ENCODE measurements at regions of chr4 and their contacts with region 1.

Region 1: GRCh38 chr4:163554870-163555465 is 60.5 kb downstream of the TMA16 start:
- DNase-seq: no peak
- ATAC-seq: no peak
- H3K4me3 ChIP-seq: no peak overlapping the region
- H3K27ac ChIP-seq: no peak overlapping the region
- H3K4me1 ChIP-seq: 0 out of 2 replicates have a peak, but pooled peaks cover 6% of the 10 kb centered on the region
- H3K27me3 ChIP-seq: no peaks in the 10 kb centered on the region
- CTCF ChIP-seq: peak; percentile 28; the same call in 1 of the 2 replicates
- EP300 ChIP-seq: no peak
- POLR2A ChIP-seq: no peak
- RAD21 ChIP-seq: no peak

Region 2: GRCh38 chr4:163663454-163664225 is 108.7 kb after region 1 on chr4:
- CTCF ChIA-PET with region 1: no interaction called
- POLR2A ChIA-PET with region 1: no interaction called
- in situ Hi-C with region 1: loop called (anchors 10 kb)
- intact Hi-C with region 1: no loop called
- DNase-seq: no peak
- ATAC-seq: no peak
- H3K4me3 ChIP-seq: no peak overlapping the region
- H3K27ac ChIP-seq: no peak overlapping the region
- H3K4me1 ChIP-seq: no peaks in the 10 kb centered on the region
- H3K27me3 ChIP-seq: no peaks in the 10 kb centered on the region
- CTCF ChIP-seq: no peak
- EP300 ChIP-seq: no peak
- POLR2A ChIP-seq: no peak
- RAD21 ChIP-seq: no peak

Region 3: DNA sequence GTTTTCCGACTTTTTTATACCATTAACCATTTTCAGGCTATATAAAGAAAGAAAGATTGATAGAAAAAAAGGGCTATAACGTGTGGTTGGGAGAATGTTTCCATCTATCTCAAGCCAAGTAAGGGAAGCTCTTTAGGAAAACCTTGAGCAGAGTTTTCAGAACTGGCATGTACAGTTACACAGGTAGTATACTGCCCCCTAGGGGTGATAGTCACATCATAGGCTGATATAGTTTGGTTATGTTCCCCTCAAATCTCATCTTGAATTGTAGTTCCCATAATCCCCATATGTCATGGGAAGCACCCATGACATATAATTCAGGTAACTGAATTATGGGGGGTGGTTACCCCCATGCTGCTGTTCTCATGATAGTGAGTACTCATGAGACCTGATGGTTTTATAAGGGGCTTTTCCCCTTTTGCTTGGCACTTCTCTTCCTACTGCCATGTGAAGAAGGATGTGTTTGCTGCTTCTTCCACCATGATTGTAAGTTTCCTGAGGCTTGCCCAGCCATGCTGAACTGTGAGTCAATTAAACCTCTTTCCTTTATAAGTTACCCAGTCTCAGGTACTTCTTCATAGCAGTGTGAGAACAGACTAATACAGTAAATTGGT is 126.3 kb after region 1 on chr4:
- CTCF ChIA-PET with region 1: interaction called, 4 read pairs
- POLR2A ChIA-PET with region 1: no interaction called
- in situ Hi-C with region 1: no loop called
- intact Hi-C with region 1: loop called (anchors 1 kb)
- DNase-seq: peak; percentile 35
- ATAC-seq: peak; percentile 87
- H3K4me3 ChIP-seq: no peak overlapping the region
- H3K27ac ChIP-seq: no peak overlapping the region
- H3K4me1 ChIP-seq: no peaks in the 10 kb centered on the region
- H3K27me3 ChIP-seq: no peaks in the 10 kb centered on the region
- CTCF ChIP-seq: peak; percentile 67
- EP300 ChIP-seq: no peak
- POLR2A ChIP-seq: no peak
- RAD21 ChIP-seq: no peak

Region 4: DNA sequence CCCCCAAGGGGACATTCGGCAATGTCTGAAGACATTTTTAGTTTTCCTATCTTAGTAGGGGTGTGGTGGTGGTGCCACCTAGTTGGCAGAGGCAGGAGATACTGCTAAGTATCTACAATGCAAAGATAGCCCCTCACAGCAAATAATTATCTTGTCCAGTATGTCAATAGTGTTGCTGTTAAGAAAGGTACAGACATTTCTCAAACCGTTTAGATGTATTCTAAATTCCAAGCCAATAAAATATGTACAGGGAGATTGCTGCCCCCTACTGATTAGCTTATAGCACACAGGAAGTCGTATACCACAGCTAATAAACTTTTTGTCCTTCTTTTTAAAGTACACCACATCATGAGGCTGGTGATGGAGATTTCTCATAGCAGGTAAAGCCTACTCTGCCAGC is 200.0 kb after region 1 on chr4:
- CTCF ChIA-PET with region 1: no interaction called
- POLR2A ChIA-PET with region 1: no interaction called
- in situ Hi-C with region 1: no loop called
- intact Hi-C with region 1: loop called (anchors 2 kb)
- DNase-seq: no peak
- ATAC-seq: no peak
- H3K4me3 ChIP-seq: no peak overlapping the region
- H3K27ac ChIP-seq: no peak overlapping the region
- H3K4me1 ChIP-seq: no peaks in the 10 kb centered on the region
- H3K27me3 ChIP-seq: no peaks in the 10 kb centered on the region
- CTCF ChIP-seq: 0 out of 2 replicates have a peak, but pooled peaks have one; percentile 15
- EP300 ChIP-seq: no peak
- POLR2A ChIP-seq: no peak
- RAD21 ChIP-seq: no peak

Region 5: DNA sequence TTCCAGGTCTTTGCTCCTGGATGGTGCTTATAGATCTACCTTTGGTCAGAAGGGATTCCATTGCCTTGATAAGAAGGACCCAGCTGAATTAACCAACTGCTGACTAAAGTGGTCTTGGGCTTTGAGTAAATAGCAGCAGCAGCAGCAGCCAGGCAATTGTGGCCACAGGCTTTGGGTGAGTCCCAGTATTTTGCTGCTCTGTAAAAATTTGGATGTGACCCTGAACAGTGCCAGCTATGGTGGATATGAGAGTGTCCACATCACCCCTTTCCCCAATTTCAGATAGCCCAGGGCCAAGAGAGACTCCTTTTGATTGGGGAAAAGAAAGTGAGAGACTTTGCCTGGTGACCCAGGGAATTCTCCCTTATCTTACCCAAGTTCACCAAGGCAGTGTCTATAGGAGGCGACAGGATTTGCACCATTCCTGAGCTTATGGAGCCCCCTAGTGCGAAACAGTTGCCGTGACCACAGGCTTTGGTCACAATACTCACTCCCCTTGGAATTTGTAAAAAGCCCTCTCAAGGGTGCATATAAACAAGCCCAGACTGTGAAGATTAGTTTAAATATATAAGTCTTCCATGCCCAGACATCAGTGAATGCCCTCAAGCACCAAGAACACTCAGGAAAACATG is 457.5 kb after region 1 on chr4:
- CTCF ChIA-PET with region 1: interaction called, 4 read pairs
- POLR2A ChIA-PET with region 1: no interaction called
- in situ Hi-C with region 1: no loop called
- intact Hi-C with region 1: loop called (anchors 1 kb)
- DNase-seq: peak; percentile 28
- ATAC-seq: peak; percentile 98
- H3K4me3 ChIP-seq: no peak overlapping the region
- H3K27ac ChIP-seq: no peak overlapping the region
- H3K4me1 ChIP-seq: no peaks in the 10 kb centered on the region
- H3K27me3 ChIP-seq: no peaks in the 10 kb centered on the region
- CTCF ChIP-seq: peak; percentile 75
- EP300 ChIP-seq: no peak
- POLR2A ChIP-seq: no peak
- RAD21 ChIP-seq: peak; percentile 42; the same call in 1 of the 2 replicates

Region 6: DNA sequence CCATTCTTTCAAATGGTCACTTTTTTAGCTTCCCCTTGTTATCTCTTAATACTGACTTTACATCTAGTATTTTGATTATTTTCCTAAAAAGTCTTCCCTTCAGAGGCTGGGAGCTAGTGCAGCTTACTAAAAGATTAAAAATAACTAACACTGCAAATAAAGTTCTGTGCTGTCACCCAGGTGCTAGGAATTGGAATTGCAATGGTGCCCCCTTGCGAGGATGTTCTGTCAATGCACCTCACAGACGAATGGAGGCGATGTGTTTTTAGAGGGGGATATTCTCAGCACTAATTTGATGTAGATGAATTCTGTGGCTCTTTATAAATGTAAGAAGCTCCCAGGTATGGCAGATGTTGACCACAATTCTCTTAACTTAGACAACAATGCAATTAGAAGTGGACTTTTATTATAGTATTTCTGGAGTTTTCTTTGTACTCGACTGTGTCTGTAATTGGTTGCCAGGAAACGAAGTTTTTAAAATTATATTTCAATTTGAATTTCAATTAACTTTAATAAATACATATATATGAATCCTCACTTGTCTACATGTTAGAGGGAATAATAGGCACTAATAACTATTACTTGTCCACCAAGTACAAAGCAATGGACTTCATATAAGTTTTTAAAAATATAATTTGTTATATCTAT is 1177.0 kb after region 1 on chr4:
- CTCF ChIA-PET with region 1: no interaction called
- POLR2A ChIA-PET with region 1: no interaction called
- in situ Hi-C with region 1: loop called (anchors 25 kb)
- intact Hi-C with region 1: loop called (anchors 5 kb)
- DNase-seq: peak; percentile 20
- ATAC-seq: peak; percentile 72; the same call in 2 of the 3 replicates
- H3K4me3 ChIP-seq: no peak overlapping the region
- H3K27ac ChIP-seq: no peak overlapping the region
- H3K4me1 ChIP-seq: no peaks in the 10 kb centered on the region
- H3K27me3 ChIP-seq: no peaks in the 10 kb centered on the region
- CTCF ChIP-seq: peak; percentile 78
- EP300 ChIP-seq: no peak
- POLR2A ChIP-seq: no peak
- RAD21 ChIP-seq: 0 out of 2 replicates have a peak, but pooled peaks have one; percentile 30